Tibial artery (tissue), 4 donors: ENCODE measurements at regions of chr9 and their contacts with region 1.

Region 1: GRCh38 chr9:71819115-71819739 is 50.9 kb upstream of the CEMIP2 start:
- DNase-seq: peak in 1 of 2 donors; percentile 22
- H3K4me3 ChIP-seq: no peak overlapping the region
- H3K27ac ChIP-seq: no peak overlapping the region
- H3K4me1 ChIP-seq: peaks cover 0 to 29% (median 14%) of the 10 kb centered on the region in 4 donors
- H3K27me3 ChIP-seq: no peaks in the 10 kb centered on the region
- CTCF ChIP-seq: peak; percentile 56 to 72

Region 2: DNA sequence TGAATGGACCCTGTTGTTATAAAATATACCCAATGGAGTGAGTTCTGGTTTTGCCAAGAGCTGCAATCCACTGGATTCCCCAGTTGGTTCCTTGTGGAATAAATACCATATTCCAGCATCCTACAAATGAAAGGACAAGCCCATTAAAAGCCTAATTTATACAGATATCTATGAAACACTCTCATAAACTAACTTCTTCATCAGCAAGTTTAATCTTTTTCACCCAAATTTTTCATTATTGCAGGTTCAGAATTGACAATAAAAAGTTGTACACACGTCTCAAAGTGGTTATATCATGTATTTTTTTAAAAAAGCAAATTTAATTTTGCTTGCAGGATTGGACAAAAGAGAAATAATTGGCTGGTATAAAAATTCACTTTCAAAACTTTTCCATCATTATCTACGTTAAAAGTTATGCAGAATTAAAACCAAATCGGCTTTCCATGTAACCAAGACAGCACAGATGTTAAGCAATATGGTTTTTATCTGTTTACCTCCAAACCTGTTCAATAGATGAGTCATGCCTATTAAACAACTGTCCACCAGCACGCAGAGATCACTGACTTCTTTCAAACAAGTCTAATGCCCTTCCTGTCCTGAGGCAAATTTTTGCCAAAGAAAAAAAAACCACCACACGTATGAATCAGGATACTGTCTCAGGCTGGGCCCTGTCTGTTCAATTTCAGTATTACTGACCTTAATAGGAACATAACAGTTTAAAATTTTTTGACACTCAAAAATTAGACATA is 93.5 kb before region 1 on chr9:
- intact Hi-C with region 1: no loop called
- DNase-seq: no peak
- H3K4me3 ChIP-seq: no peak overlapping the region
- H3K27ac ChIP-seq: no peak overlapping the region
- H3K4me1 ChIP-seq: no peaks in the 10 kb centered on the region
- H3K27me3 ChIP-seq: no peaks in the 10 kb centered on the region
- CTCF ChIP-seq: no peak

Region 3: DNA sequence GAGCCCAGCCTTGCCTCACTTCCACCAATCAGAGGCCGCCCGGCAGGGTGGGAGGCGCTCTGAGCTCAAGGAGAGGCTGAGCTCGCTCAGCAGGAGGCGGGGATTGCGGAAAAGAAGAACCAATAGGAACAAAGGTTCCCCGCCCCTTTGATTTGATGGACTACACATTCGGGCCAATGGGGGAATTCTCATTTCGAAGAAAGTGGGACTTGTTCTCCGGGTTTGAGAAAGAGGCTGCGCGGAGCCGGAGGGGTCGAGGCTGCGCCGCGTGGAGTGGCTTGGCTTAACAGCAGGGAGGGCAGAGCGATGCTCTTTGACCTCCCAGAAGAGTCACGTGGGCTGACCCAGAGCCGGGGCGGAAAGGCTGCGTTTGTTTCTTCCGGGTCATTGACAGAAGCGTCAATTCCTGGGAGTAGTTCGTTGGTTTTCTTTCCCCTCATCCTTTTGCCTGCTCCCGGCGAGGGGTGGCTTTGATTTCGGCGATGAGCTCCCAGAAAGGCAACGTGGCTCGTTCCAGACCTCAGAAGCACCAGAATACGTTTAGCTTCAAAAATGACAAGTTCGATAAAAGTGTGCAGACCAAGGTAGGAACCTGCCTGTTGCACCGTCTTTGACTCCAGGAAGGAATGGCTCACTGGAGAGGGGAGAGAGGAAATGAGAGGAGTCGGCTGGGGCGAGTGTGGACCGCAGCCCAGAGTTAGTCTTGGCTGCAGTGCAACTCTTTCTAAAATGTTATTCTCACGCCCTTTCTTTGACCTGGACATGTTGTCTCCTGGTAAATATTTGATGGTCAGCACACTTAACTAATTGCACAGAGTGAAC is 92.2 kb after region 1 on chr9 and contains the start of gene C9orf85:
- intact Hi-C with region 1: loop called (anchors 10 kb)
- DNase-seq: peak; percentile 99
- H3K4me3 ChIP-seq: peak within 1 kb of the TSS; percentile 78 to 95
- H3K27ac ChIP-seq: peak within 1 kb of the TSS; percentile 85 to 94
- H3K4me1 ChIP-seq: peaks cover 0 to 64% (median 22%) of the 10 kb centered on the region in 4 donors
- H3K27me3 ChIP-seq: no peaks in the 10 kb centered on the region
- CTCF ChIP-seq: peak in 1 of 2 experiments; percentile 20